B cell (primary cell): ENCODE measurements at regions of chr19 and their contacts with region 1.

Region 1: DNA sequence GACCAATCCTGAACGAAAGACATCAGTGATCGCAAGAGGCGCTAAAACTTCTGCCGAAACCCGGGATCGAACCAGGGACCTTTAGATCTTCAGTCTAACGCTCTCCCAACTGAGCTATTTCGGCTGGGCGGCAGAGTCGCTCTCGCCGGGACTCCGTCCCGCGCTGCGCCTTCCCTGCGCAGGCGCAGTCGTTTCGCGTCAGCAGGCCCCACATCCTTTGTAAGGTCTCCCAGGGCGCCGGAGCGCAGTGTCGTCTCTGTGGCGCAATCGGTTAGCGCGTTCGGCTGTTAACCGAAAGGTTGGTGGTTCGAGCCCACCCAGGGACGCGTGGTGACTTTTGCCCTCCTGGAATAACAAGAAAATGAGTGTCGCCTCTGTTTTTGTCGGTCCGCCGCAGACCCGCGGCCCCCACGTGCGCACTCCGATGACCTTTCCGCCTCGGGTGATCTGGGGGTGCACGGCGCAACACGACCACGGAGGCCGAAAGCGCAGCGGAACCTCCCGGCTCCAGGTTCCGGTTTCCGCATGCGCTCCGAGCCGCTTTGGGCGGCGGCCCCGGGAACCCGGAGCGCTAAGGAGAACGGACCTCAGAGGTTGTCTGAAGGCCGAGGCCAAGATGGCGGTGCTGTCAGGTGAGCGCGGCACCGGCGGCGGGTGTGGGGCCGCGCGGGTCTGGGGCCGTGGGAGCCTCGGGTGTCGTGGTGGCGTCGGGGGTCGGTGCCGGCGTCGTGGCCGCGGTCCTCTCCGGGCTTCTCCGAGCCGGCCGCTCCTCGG is at the start of gene NDUFS7:
- DNase-seq: peak; percentile 97
- ATAC-seq: peak; percentile 82
- H3K4me3 ChIP-seq: peak within 1 kb of the TSS; percentile 54 to 93 (median 76)
- H3K4me3 Mint-ChIP-seq: peak within 1 kb of the TSS; percentile 90
- H3K27ac ChIP-seq: peak within 1 kb of the TSS; percentile 76 to 85
- H3K27ac Mint-ChIP-seq: peak within 1 kb of the TSS; percentile 100
- H3K4me1 ChIP-seq: peaks cover 11 to 15% of the 10 kb centered on the region in 2 donors
- H3K4me1 Mint-ChIP-seq: peaks cover 17% of the 10 kb centered on the region
- H3K27me3 ChIP-seq: no peaks in the 10 kb centered on the region
- H3K27me3 Mint-ChIP-seq: peaks cover 3% of the 10 kb centered on the region
- CTCF ChIP-seq: peak; percentile 14
- total RNA-seq, gene NDUFS7: 58.8 and 59.0 TPM in 2 replicates

Region 2: GRCh38 chr19:1354977-1355567 is 28.4 kb before region 1 on chr19:
- CTCF ChIA-PET with region 1: interaction called, 3 read pairs
- POLR2A ChIA-PET with region 1: interaction called, 8 read pairs
- intact Hi-C with region 1: loop called (anchors 1 kb)
- DNase-seq: no peak
- ATAC-seq: peak; percentile 48
- H3K4me3 ChIP-seq: peak overlapping the region; percentile 35 to 78 (median 72)
- H3K4me3 Mint-ChIP-seq: peak overlapping the region; percentile 93
- H3K27ac ChIP-seq: peak overlapping the region in 1 of 2 donors; percentile 58
- H3K27ac Mint-ChIP-seq: peak overlapping the region; percentile 70
- H3K4me1 ChIP-seq: peaks cover 9 to 18% of the 10 kb centered on the region in 2 donors
- H3K4me1 Mint-ChIP-seq: peaks cover 18% of the 10 kb centered on the region
- H3K27me3 ChIP-seq: no peaks in the 10 kb centered on the region
- H3K27me3 Mint-ChIP-seq: no peaks in the 10 kb centered on the region
- CTCF ChIP-seq: no peak

Region 3: DNA sequence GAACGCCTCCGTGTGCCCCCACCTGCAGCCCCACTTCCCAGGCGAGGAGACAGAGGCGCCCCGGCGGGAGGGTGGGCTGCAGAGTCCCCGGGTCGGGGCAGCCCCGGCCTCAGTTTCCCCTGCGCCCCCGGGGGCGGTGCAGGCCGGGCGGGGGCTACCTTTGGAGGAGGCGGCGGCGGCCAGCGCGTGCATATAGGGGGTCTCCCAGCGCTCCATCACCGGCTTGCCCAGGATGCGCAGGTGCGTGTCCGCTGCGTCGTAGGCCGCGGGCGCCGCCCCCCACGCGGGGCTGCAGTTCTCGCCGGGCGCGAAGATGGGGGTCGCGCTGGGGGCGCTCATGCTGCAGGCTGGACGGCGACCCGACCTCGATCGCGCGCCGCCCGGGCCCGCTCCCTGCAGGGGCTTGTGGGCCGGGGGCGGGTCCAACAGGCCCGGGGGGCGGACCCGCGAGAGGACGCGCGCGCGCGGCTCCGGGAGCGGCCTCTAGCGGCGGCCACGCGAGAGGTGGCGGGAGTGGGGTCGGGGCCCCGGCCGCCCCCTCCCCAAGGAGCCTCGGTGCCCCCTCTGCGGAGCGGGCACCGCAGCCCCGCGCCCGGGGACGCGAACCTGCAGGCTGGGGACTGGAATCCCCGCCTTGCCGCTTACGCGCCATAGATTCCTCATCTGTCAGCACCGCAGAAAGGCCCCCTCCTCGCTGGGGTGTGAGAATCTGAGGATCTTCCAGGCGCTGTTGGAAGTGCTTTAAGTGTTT is 17.8 kb after region 1 on chr19 and contains the start of gene GAMT:
- CTCF ChIA-PET with region 1: interaction called, 5 read pairs
- POLR2A ChIA-PET with region 1: interaction called, 3 read pairs
- intact Hi-C with region 1: loop called (anchors 1 kb)
- DNase-seq: peak; percentile 77
- ATAC-seq: peak; percentile 93
- H3K4me3 ChIP-seq: peak within 1 kb of the TSS; percentile 39 to 69 (median 60)
- H3K4me3 Mint-ChIP-seq: peak within 1 kb of the TSS; percentile 76
- H3K27ac ChIP-seq: peak within 1 kb of the TSS in 1 of 2 donors; percentile 19
- H3K27ac Mint-ChIP-seq: no peak within 1 kb of the TSS
- H3K4me1 ChIP-seq: peaks cover 17 to 24% of the 10 kb centered on the region in 2 donors
- H3K4me1 Mint-ChIP-seq: peaks cover 12% of the 10 kb centered on the region
- H3K27me3 ChIP-seq: peaks cover 0 to 23% (median 5%) of the 10 kb centered on the region in 4 experiments
- H3K27me3 Mint-ChIP-seq: peaks cover 4% of the 10 kb centered on the region
- CTCF ChIP-seq: peak; percentile 71
- total RNA-seq, gene GAMT: 8.8 and 9.0 TPM in 2 replicates